ENCODE measurements at regions of chr2 and their contacts with region 1.

Region 1: GRCh38 chr2:152335010-152335725 is at the start of gene FMNL2:
- DNase-seq: peak; percentile 54
- H3K4me3 Mint-ChIP-seq: peak within 1 kb of the TSS; percentile 85
- H3K27ac Mint-ChIP-seq: peak within 1 kb of the TSS; percentile 56
- H3K4me1 Mint-ChIP-seq: peaks cover 27% of the 10 kb centered on the region
- H3K27me3 Mint-ChIP-seq: peaks cover 48% of the 10 kb centered on the region
- total RNA-seq, gene FMNL2: 14.8 and 16.1 TPM in 2 replicates

Region 2: GRCh38 chr2:151481744-151482143 is 853.4 kb before region 1 on chr2:
- intact Hi-C with region 1: loop called (anchors 2 kb)
- DNase-seq: no peak
- H3K4me3 Mint-ChIP-seq: no peak overlapping the region
- H3K27ac Mint-ChIP-seq: peak overlapping the region; percentile 65
- H3K4me1 Mint-ChIP-seq: peaks cover 35% of the 10 kb centered on the region
- H3K27me3 Mint-ChIP-seq: no peaks in the 10 kb centered on the region

Region 3: DNA sequence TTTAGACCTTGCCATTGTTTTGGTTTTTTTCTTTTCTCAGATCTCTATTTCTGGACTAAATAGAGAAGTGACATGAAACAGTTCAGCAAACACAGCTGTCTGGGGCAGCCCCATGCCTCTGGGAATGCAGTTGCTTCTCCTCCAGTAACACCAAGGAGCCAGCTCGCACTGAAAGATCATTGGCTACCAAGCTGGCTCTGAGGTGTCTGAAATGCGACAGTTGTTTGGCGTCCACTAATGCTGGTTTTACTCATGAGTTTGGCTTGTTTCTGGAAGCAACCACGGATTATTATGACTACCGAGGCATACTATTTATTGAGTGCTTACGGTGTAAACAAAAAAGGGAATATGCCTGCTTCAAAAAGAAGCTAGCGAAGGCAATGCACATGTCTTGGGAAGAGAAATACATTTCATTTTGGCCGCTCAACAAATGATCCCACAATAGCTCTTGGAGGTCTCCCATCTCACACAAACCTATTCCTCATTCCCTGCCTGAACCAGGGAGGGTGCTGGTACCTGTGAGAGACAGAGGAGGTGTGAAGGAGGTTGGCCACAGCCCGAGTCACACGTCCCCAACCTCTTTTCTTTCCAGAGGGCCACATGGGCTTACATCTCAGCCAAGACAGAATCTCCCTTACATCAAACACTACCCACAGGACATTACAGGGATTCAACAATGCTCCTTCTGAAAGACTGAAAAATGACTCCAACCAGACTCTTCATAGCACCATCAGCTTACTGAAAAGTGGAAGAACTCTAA is 563.4 kb before region 1 on chr2:
- intact Hi-C with region 1: no loop called
- DNase-seq: no peak
- H3K4me3 Mint-ChIP-seq: no peak overlapping the region
- H3K27ac Mint-ChIP-seq: no peak overlapping the region
- H3K4me1 Mint-ChIP-seq: no peaks in the 10 kb centered on the region
- H3K27me3 Mint-ChIP-seq: no peaks in the 10 kb centered on the region

Region 4: GRCh38 chr2:152175458-152176325 is 159.5 kb before region 1 on chr2 and contains the start of gene STAM2:
- intact Hi-C with region 1: loop called (anchors 1 kb)
- DNase-seq: peak; percentile 91
- H3K4me3 Mint-ChIP-seq: peak within 1 kb of the TSS; percentile 95
- H3K27ac Mint-ChIP-seq: peak within 1 kb of the TSS; percentile 96
- H3K4me1 Mint-ChIP-seq: peaks cover 38% of the 10 kb centered on the region
- H3K27me3 Mint-ChIP-seq: peaks cover 3% of the 10 kb centered on the region
- total RNA-seq, gene STAM2: 18.6 and 20.0 TPM in 2 replicates

Region 5: DNA sequence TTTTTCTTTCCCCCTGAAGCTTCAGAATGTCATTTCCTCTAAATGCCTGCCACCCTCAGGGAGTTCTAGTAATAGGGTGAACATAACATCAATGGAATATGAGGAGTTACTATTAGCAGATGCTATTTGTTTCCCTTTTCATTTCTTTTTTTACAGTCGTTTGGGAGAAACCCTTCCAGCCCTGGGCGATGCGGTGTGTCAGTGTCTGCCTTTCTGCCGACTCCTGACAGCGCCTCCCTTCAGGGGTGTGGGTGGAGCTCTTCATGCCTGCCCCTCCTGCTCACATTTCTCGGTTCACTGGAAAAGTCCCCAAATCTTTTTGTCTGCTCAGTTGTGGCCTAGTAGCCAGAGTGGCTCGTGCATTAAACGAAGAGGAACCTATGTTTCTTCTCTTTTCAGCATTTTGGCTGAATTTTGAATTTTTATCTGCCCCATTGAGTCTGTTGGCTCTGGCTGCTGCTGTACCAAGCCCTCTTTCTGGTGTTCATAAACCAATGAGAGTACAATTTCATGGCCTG is 72.1 kb after region 1 on chr2:
- intact Hi-C with region 1: loop called (anchors 2 kb)
- DNase-seq: peak; percentile 27
- H3K4me3 Mint-ChIP-seq: peak overlapping the region; percentile 73
- H3K27ac Mint-ChIP-seq: peak overlapping the region; percentile 67
- H3K4me1 Mint-ChIP-seq: peaks cover 57% of the 10 kb centered on the region
- H3K27me3 Mint-ChIP-seq: no peaks in the 10 kb centered on the region

Region 6: GRCh38 chr2:152499896-152500735 is 164.9 kb after region 1 on chr2:
- intact Hi-C with region 1: loop called (anchors 10 kb)
- DNase-seq: no peak
- H3K4me3 Mint-ChIP-seq: no peak overlapping the region
- H3K27ac Mint-ChIP-seq: no peak overlapping the region
- H3K4me1 Mint-ChIP-seq: peaks cover 18% of the 10 kb centered on the region
- H3K27me3 Mint-ChIP-seq: peaks cover 1% of the 10 kb centered on the region

Region 7: GRCh38 chr2:152611458-152612231 is 276.5 kb after region 1 on chr2:
- intact Hi-C with region 1: loop called (anchors 5 kb)
- DNase-seq: no peak
- H3K4me3 Mint-ChIP-seq: peak overlapping the region; percentile 6
- H3K27ac Mint-ChIP-seq: peak overlapping the region; percentile 18
- H3K4me1 Mint-ChIP-seq: peaks cover 33% of the 10 kb centered on the region
- H3K27me3 Mint-ChIP-seq: peaks cover 3% of the 10 kb centered on the region

Region 8: GRCh38 chr2:152717228-152718075 is 382.3 kb after region 1 on chr2 and contains the start of gene PRPF40A:
- intact Hi-C with region 1: loop called (anchors 1 kb)
- DNase-seq: peak; percentile 98
- H3K4me3 Mint-ChIP-seq: peak within 1 kb of the TSS; percentile 100
- H3K27ac Mint-ChIP-seq: peak within 1 kb of the TSS; percentile 97
- H3K4me1 Mint-ChIP-seq: peaks cover 56% of the 10 kb centered on the region
- H3K27me3 Mint-ChIP-seq: peaks cover 1% of the 10 kb centered on the region
- total RNA-seq, gene PRPF40A: 152 and 172 TPM in 2 replicates

Measured in activated T-helper 1 cell treated with anti-CD3 and anti-CD28 coated beads, Interleukin-12 subunit alpha, Interleukin-12 subunit beta, Interleukin-2, Interleukin-4 antibody, amounts not matched to agents 30 ng/mL and 10 ng/mL and 1 ng/mL, durations not matched to agents 14 hours and 24 hours and 36 hours (primary cell).